ENCODE measurements at regions of chr4 and their contacts with region 1.

Region 1: DNA sequence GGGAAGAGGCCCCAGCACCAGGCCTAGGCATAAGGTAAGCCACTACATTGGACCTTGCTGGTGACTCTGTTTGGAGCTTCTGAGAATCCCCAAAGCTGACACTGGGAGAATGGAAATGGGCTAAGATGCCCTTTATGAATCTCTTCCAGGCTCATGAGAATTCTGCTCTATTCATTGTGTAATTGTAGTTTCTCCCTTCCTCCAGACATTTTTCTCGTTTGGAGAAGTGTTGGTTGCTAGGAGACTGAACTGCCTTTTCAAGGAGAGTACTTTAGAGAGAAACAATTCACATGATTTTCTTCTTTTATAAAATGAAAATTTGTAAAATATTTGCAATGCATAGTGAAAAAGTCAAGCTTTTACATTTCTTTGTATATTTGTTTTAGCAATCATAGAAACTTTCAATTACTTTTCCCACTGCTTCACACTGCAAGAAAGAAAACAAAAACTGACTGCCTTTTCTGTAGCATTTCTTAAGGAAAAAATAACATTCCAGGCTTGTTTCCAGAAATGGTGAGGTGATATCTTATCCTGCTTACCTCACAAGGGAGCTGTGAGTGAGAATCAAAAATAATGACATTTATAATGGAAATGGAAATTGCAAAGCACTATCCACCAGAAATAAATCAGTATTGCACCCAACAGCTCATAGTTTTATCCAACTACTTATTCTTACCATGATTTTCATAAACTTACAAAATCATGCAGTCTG is 24.9 kb upstream of the DCHS2 start:
- DNase-seq: no peak

Region 2: GRCh38 chr4:153713866-153714646 is 802.4 kb before region 1 on chr4:
- intact Hi-C with region 1: no loop called
- DNase-seq: no peak

Region 3: GRCh38 chr4:154406018-154406795 is 110.3 kb before region 1 on chr4:
- intact Hi-C with region 1: loop called in 1 of 2 experiments (anchors 10 kb)
- DNase-seq: no peak

Measured in posterior vena cava (tissue), 2 donors.